AG04450 (cell line): ENCODE measurements at regions of chr2 and their contacts with region 1.

Region 1: GRCh38 chr2:214604861-214605260 is 194.0 kb downstream of the VWC2L start:
- DNase-seq: peak; percentile 65
- H3K4me3 ChIP-seq: no peak overlapping the region
- H3K27ac ChIP-seq: no peak overlapping the region
- H3K27me3 ChIP-seq: no peaks in the 10 kb centered on the region
- CTCF ChIP-seq: no peak

Region 2: GRCh38 chr2:214593727-214594126 is 11.1 kb before region 1 on chr2:
- CTCF ChIA-PET with region 1: interaction called, 13 read pairs
- POLR2A ChIA-PET with region 1: interaction called, 26 read pairs
- DNase-seq: peak; percentile 80
- H3K4me3 ChIP-seq: no peak overlapping the region
- H3K27ac ChIP-seq: peak overlapping the region; percentile 76
- H3K27me3 ChIP-seq: no peaks in the 10 kb centered on the region
- CTCF ChIP-seq: no peak

Region 3: GRCh38 chr2:214624166-214624760 is 19.4 kb after region 1 on chr2:
- CTCF ChIA-PET with region 1: no interaction called
- POLR2A ChIA-PET with region 1: no interaction called
- DNase-seq: no peak
- H3K4me3 ChIP-seq: no peak overlapping the region
- H3K27ac ChIP-seq: no peak overlapping the region
- H3K27me3 ChIP-seq: no peaks in the 10 kb centered on the region
- CTCF ChIP-seq: no peak

Region 4: DNA sequence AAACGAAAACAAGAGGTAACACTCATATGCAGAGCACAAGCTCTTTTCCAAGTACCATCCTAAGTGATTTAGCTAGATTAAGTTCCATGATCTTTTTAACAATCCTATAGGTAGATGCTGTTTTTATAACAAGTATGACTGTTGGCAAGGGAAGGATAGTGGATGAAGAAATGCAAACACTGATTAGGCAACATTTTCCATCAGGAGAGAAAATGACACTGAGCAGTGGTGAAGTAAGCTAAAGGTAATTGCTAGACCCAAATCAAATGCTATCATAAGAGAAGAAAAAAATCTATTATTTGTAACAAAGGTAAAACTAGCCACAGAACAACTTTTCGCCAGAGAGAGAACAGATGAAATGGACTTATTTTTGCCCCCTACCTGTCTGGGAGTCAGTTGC is 239.0 kb after region 1 on chr2:
- CTCF ChIA-PET with region 1: interaction called, 12 read pairs
- POLR2A ChIA-PET with region 1: no interaction called
- DNase-seq: no peak
- H3K4me3 ChIP-seq: no peak overlapping the region
- H3K27ac ChIP-seq: no peak overlapping the region
- H3K27me3 ChIP-seq: no peaks in the 10 kb centered on the region
- CTCF ChIP-seq: no peak

Region 5: DNA sequence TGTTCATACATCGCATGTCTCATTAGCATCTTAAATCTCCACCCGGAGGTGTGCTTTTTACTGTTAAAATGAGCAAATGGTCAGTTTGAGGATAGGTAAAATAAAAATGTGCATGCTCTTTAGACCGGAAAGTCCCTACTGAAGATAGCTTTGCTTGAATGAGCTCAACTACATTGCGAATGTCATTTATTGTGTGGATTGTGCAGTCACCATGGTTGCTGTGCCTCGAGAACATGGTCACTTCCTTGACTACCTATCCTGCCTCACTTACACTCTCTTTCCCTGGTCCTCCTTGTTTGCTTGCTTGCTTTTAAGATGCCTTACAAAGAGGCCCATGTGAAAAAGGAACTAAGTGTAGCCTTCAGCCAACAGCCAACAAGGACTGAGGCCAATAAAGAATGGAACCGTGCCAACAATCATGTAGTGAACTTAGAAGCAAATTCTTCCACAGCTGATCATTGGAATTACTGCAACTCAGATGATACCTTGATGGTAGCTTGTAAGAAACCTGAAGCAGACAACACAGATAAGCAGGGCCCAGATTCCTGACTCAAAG is 276.9 kb after region 1 on chr2:
- CTCF ChIA-PET with region 1: no interaction called
- POLR2A ChIA-PET with region 1: no interaction called
- DNase-seq: no peak
- H3K4me3 ChIP-seq: no peak overlapping the region
- H3K27ac ChIP-seq: no peak overlapping the region
- H3K27me3 ChIP-seq: no peaks in the 10 kb centered on the region
- CTCF ChIP-seq: no peak